IMR-90 (cell line): ENCODE measurements at regions of chr15 and their contacts with region 1.

Region 1: DNA sequence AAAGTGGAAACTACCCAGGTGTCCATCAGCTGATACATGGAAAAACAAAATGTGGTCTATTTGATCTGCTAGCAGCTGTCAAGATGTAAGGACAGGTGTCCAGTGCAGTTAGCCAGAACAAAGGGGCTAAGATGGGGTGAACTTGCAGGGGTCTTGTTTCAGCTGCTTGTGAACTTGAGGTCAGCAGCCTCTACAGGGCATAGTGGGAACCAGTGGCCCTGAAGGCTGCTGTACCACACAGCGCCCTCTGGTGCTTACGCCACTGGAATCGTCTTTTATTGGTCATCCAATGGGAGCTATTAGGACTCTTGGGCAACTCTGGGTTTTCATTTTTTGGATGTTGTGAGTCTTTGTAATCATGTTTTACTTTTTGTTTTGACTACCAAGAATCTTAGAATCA is 62.2 kb upstream of the CTSH start:
- DNase-seq: peak; percentile 50
- ATAC-seq: peak; percentile 38
- H3K4me3 ChIP-seq: no peak overlapping the region
- H3K27ac ChIP-seq: no peak overlapping the region
- H3K4me1 ChIP-seq: peaks cover 15% of the 10 kb centered on the region
- H3K27me3 ChIP-seq: peaks cover 9% of the 10 kb centered on the region
- CTCF ChIP-seq: peak; percentile 54
- POLR2A ChIP-seq: no peak
- RAD21 ChIP-seq: peak; percentile 47

Region 2: DNA sequence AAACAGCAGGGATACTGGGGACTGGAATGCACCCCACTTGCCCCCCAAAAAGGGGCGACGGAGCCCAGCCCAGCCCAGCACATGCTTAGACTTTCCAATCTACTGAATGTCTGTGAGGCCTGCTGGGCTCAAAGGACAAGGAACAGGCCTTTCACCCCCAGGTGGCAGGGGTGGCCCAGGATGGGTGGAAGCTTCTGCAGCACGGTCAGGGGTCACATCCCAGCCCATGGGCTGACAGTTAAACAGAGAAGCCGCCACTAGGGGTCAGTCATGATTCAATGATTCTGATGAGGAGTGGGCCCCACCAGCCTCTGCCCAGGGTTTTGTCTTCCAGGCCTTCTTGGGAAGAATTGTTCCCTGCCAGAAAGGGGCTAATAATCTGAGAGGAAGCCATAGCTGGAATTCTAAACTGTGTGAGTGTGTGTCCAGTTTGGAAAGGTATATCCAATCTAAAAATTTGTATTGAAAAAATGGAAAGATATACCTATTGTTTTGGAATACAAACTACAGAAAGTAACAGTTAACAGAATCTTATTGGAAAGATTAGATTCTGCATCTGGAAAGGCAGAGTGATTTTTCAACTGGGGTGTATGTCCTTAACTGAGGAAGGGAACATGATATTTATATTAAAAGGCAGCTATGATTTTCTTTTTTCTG is 368.3 kb before region 1 on chr15:
- CTCF ChIA-PET with region 1: no interaction called
- POLR2A ChIA-PET with region 1: no interaction called
- dilution Hi-C with region 1: no loop called
- in situ Hi-C with region 1: no loop called
- intact Hi-C with region 1: loop called (anchors 5 kb)
- DNase-seq: peak; percentile 19
- ATAC-seq: peak; percentile 76
- H3K4me3 ChIP-seq: no peak overlapping the region
- H3K27ac ChIP-seq: no peak overlapping the region
- H3K4me1 ChIP-seq: no peaks in the 10 kb centered on the region
- H3K27me3 ChIP-seq: peaks cover 50% of the 10 kb centered on the region
- CTCF ChIP-seq: peak; percentile 59
- POLR2A ChIP-seq: no peak
- RAD21 ChIP-seq: peak; percentile 58

Region 3: GRCh38 chr15:78909791-78910228 is 97.3 kb before region 1 on chr15:
- CTCF ChIA-PET with region 1: interaction called, 4 read pairs
- POLR2A ChIA-PET with region 1: interaction called, 5 read pairs
- dilution Hi-C with region 1: no loop called
- in situ Hi-C with region 1: no loop called
- intact Hi-C with region 1: loop called (anchors 1 kb)
- DNase-seq: peak; percentile 45
- ATAC-seq: peak; percentile 28
- H3K4me3 ChIP-seq: no peak overlapping the region
- H3K27ac ChIP-seq: no peak overlapping the region
- H3K4me1 ChIP-seq: peaks cover 15% of the 10 kb centered on the region
- H3K27me3 ChIP-seq: no peaks in the 10 kb centered on the region
- CTCF ChIP-seq: peak; percentile 70
- POLR2A ChIP-seq: no peak
- RAD21 ChIP-seq: peak; percentile 69

Region 4: DNA sequence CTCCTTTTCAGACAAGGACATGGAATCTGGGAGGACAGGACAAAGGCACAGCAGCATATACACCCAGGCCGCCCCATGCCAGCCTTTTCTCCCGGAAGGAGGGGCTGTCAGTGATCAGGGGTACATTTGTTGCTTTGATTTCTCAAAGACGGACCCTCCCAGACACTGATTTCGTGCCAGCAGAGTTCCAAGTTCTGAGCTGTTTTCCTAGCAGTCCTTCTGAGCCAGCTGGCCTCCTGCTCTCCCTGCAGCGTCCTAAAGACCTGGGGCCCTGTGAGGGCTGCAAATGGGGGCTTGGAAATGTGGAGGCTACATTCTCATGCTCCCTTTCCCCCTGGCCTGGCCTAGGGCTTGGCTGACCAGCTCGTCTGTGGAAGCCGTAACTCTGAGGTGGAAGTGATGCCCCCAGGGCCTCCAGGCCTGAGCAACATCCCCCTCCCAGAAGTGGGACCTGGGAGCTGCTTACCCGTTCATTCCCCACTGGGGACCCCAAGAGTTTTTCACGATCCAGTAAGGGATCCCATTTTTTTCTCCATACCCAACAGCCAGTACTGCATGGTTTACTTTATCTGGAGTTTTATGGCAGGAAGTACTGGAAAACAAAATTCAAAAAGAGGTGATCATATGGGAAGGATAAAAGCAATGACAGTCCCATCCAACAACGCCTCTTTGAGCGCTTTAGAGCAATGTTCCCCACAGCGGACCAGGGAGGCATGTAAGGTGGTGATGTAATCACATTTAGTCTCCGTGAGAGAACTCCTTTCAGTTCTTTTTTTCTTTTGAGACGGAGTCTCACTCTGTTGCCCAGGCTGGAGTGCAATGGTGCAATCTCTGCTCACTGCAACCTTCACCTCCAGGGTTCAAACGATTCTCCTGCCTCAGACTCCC is 84.3 kb before region 1 on chr15:
- CTCF ChIA-PET with region 1: no interaction called
- POLR2A ChIA-PET with region 1: no interaction called
- dilution Hi-C with region 1: no loop called
- in situ Hi-C with region 1: no loop called
- intact Hi-C with region 1: no loop called
- DNase-seq: no peak
- ATAC-seq: no peak
- H3K4me3 ChIP-seq: no peak overlapping the region
- H3K27ac ChIP-seq: no peak overlapping the region
- H3K4me1 ChIP-seq: peaks cover under 1% of the 10 kb centered on the region; the same call in 1 of the 2 replicates
- H3K27me3 ChIP-seq: no peaks in the 10 kb centered on the region
- CTCF ChIP-seq: no peak
- POLR2A ChIP-seq: no peak
- RAD21 ChIP-seq: no peak